Spleen (tissue), 13 donors: ENCODE measurements at regions of chr9 and their contacts with region 1.

Region 1: GRCh38 chr9:92790542-92791527 is 26.2 kb upstream of the BICD2 start:
- DNase-seq: no peak
- H3K4me3 ChIP-seq: no peak overlapping the region
- H3K27ac ChIP-seq: no peak overlapping the region
- H3K4me1 ChIP-seq: peaks cover 0 to 11% (median 5%) of the 10 kb centered on the region in 6 donors
- H3K27me3 ChIP-seq: no peaks in the 10 kb centered on the region
- CTCF ChIP-seq: peak; percentile 77 to 95 (median 87)
- POLR2A ChIP-seq: no peak

Region 2: GRCh38 chr9:92716557-92716956 is 74.3 kb before region 1 on chr9:
- intact Hi-C with region 1: loop called (anchors 5 kb)
- DNase-seq: peak; percentile 90
- H3K4me3 ChIP-seq: no peak overlapping the region
- H3K27ac ChIP-seq: peak overlapping the region in 2 of 8 donors; percentile 45 to 56
- H3K4me1 ChIP-seq: peaks cover 8 to 58% (median 38%) of the 10 kb centered on the region in 6 donors
- H3K27me3 ChIP-seq: no peaks in the 10 kb centered on the region
- CTCF ChIP-seq: peak; percentile 84 to 96 (median 94)
- POLR2A ChIP-seq: no peak

Region 3: GRCh38 chr9:92882276-92882675 is 91.4 kb after region 1 on chr9:
- intact Hi-C with region 1: no loop called
- DNase-seq: peak; percentile 40
- H3K4me3 ChIP-seq: no peak overlapping the region
- H3K27ac ChIP-seq: no peak overlapping the region
- H3K4me1 ChIP-seq: peaks cover 0 to 9% (median 6%) of the 10 kb centered on the region in 6 donors
- H3K27me3 ChIP-seq: peaks cover 0 to 6% (median 0%) of the 10 kb centered on the region in 7 donors
- CTCF ChIP-seq: no peak
- POLR2A ChIP-seq: no peak